ENCODE measurements at regions of chr10 and their contacts with region 1.

Region 1: DNA sequence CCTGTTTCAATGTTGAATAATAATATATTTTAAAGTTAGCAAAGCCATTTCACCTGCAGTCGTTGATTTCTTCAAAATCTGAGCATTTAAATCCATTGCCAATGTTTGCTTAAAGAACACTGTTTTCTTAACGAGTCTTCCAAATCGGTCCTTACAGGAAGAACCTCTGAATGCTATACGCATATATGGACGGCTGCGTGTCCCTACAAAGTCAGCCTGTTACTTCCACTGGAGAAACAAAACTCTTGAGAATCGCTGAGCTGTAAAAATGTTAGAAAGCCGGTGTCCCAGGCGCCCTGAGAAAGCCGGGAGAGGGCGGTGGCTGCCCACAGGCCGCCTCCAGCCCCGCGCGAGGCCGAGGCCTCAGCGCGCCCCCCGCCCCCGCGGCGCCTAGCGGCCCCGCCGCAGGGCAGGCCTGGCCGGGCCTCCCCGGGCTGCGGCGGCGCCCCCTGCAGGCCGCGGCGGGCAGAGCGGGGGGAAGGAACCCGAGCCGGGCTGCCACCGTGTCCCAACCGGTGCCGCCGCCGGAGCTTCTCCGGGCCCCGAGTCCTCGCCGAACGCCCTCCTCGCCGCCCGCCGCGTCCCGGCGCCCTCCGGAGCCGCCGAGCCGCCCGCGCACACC is at the start of gene FHIP2A:
- DNase-seq: no peak
- H3K4me3 ChIP-seq: peak within 1 kb of the TSS; percentile 76
- CTCF ChIP-seq: peak; percentile 57

Region 2: GRCh38 chr10:114470956-114471905 is 350.2 kb before region 1 on chr10:
- CTCF ChIA-PET with region 1: interaction called, 23 read pairs
- POLR2A ChIA-PET with region 1: interaction called, 5 read pairs
- DNase-seq: peak; percentile 9
- H3K4me3 ChIP-seq: no peak overlapping the region
- CTCF ChIP-seq: peak; percentile 81

Region 3: GRCh38 chr10:114802177-114802576 is 19.2 kb before region 1 on chr10:
- CTCF ChIA-PET with region 1: interaction called, 14 read pairs
- POLR2A ChIA-PET with region 1: no interaction called
- DNase-seq: no peak
- H3K4me3 ChIP-seq: no peak overlapping the region
- CTCF ChIP-seq: no peak

Region 4: GRCh38 chr10:114837690-114838089 is 16.3 kb after region 1 on chr10:
- CTCF ChIA-PET with region 1: interaction called, 53 read pairs
- POLR2A ChIA-PET with region 1: no interaction called
- DNase-seq: no peak
- H3K4me3 ChIP-seq: no peak overlapping the region
- CTCF ChIP-seq: no peak

Region 5: GRCh38 chr10:114862456-114862855 is 41.1 kb after region 1 on chr10:
- CTCF ChIA-PET with region 1: interaction called, 13 read pairs
- POLR2A ChIA-PET with region 1: interaction called, 12 read pairs
- DNase-seq: no peak
- H3K4me3 ChIP-seq: no peak overlapping the region
- CTCF ChIP-seq: no peak

Region 6: GRCh38 chr10:114876602-114877300 is 55.3 kb after region 1 on chr10:
- CTCF ChIA-PET with region 1: interaction called, 15 read pairs
- POLR2A ChIA-PET with region 1: no interaction called
- DNase-seq: no peak
- H3K4me3 ChIP-seq: no peak overlapping the region
- CTCF ChIP-seq: peak; percentile 88

Region 7: DNA sequence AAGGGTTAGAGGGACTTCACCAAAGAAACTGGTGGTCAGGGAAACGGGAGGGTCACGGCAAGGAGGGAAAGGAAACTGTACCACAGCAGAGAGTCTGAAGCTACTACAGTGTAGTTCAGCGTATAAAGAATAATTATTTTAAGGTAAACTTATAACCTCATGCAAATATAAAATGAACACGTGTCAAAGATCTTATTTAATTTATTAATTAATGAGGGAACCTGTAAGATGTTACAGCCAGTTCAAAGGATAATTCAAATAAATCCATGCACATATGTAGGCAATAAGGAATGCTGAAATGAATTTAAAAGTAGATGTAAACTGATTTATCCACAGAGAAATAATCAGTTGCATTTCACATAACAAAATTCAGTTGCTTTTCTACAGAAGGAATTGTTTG is 222.3 kb after region 1 on chr10:
- CTCF ChIA-PET with region 1: no interaction called
- POLR2A ChIA-PET with region 1: no interaction called
- DNase-seq: no peak
- H3K4me3 ChIP-seq: no peak overlapping the region
- CTCF ChIP-seq: no peak

Measured in AG04449 (cell line).